Sigmoid colon (tissue), 7 donors: ENCODE measurements at regions of chr5 and their contacts with region 1.

Region 1: DNA sequence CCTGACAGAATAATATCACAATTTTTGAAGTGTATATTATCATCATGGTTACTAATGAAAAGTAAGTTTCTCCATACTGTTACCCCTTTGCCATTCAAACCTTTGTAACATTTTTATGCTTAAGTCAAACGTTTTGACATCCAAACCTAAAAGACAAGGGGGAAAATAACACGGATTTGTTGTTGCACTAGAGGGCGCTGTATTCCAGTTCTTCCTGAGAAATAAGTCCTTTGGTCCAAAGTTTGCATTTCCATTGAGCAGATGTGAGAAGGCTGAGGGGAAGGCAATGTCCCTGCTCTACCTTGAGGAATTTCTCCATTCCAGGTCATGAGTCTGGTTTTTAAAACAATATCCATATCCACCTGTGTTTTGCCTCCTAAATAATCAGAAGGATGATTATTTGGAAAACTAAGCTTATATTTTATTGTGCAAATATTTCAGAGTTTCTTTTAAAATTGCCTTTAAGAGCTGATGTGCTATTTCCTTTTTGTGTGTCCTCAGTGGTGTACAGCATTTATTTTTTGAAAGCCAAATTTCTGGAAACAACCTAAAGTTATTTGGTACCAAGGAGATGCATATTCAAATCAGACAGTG is 9.7 kb downstream of the LECT2 start:
- DNase-seq: peak; percentile 76
- H3K4me3 ChIP-seq: no peak overlapping the region
- H3K27ac ChIP-seq: no peak overlapping the region
- H3K4me1 ChIP-seq: no peaks in the 10 kb centered on the region
- H3K27me3 ChIP-seq: no peaks in the 10 kb centered on the region
- CTCF ChIP-seq: peak; percentile 58 to 81 (median 75)
- EP300 ChIP-seq: no peak
- POLR2A ChIP-seq: no peak

Region 2: DNA sequence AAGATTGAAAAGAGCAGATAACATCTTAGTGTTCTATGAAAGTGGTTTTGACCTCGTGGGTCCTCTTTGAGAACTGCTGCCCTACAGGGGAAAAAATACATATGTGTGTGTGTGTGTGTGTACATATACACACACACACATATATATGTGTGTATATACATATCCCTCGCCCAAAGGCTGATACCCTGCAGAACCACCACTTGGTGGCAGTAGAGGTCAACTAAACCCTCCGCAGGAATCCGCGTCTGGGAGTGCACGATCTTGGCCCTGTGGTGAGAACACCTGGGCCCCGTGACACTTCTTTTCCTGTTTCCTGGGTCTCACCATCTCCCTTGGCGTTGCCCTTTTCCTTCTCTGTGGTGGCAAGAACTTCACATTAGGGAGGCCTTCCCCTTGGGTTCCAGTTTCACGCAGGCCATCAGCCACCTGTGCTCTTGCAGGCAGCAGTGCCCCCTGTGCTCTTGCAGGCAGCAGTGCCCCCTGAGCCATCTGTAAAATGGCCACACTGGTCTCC is 57.7 kb before region 1 on chr5:
- intact Hi-C with region 1: loop called (anchors 5 kb)
- DNase-seq: no peak
- H3K4me3 ChIP-seq: no peak overlapping the region
- H3K27ac ChIP-seq: no peak overlapping the region
- H3K4me1 ChIP-seq: peaks cover 0 to 6% (median 0%) of the 10 kb centered on the region in 4 donors
- H3K27me3 ChIP-seq: no peaks in the 10 kb centered on the region
- CTCF ChIP-seq: peak; percentile 39 to 78 (median 66)
- EP300 ChIP-seq: no peak
- POLR2A ChIP-seq: no peak

Region 3: DNA sequence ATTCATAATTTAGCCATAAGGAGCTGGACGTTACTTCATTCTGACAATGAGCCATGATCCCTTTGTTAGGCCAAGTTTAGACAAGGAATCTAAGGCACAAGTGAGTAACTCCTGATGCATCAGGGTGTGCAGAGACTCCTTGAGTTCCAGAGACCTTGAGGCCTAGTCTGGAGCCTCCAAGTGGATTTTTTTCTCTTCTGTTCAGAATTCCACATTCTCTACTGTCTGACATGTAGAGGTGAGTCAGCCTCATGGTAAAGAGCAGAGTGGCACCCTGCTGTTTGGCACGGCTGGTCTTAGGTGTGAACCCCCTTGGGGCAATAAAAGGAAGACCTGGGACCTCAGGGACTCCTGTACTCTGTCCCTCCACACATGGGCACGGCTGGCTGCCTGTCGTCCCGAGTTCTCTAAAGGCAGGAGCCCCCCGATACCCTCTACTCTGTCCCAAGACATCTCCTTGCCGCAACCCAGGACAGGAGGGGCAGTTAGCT is 61.7 kb after region 1 on chr5:
- intact Hi-C with region 1: loop called (anchors 5 kb)
- DNase-seq: no peak
- H3K4me3 ChIP-seq: no peak overlapping the region
- H3K27ac ChIP-seq: peak overlapping the region in 3 of 4 donors; percentile 13 to 54 (median 41)
- H3K4me1 ChIP-seq: peaks cover 0 to 42% (median 27%) of the 10 kb centered on the region in 4 donors
- H3K27me3 ChIP-seq: no peaks in the 10 kb centered on the region
- CTCF ChIP-seq: no peak
- EP300 ChIP-seq: no peak
- POLR2A ChIP-seq: no peak

Region 4: GRCh38 chr5:136062366-136063274 is 117.6 kb after region 1 on chr5:
- intact Hi-C with region 1: loop called (anchors 2 kb)
- DNase-seq: no peak
- H3K4me3 ChIP-seq: no peak overlapping the region
- H3K27ac ChIP-seq: peak overlapping the region in 2 of 4 donors; percentile 25 to 80
- H3K4me1 ChIP-seq: peaks cover 3 to 78% (median 54%) of the 10 kb centered on the region in 4 donors
- H3K27me3 ChIP-seq: no peaks in the 10 kb centered on the region
- CTCF ChIP-seq: peak in 3 of 4 experiments; percentile 35 to 45 (median 39)
- EP300 ChIP-seq: no peak
- POLR2A ChIP-seq: no peak

Region 5: DNA sequence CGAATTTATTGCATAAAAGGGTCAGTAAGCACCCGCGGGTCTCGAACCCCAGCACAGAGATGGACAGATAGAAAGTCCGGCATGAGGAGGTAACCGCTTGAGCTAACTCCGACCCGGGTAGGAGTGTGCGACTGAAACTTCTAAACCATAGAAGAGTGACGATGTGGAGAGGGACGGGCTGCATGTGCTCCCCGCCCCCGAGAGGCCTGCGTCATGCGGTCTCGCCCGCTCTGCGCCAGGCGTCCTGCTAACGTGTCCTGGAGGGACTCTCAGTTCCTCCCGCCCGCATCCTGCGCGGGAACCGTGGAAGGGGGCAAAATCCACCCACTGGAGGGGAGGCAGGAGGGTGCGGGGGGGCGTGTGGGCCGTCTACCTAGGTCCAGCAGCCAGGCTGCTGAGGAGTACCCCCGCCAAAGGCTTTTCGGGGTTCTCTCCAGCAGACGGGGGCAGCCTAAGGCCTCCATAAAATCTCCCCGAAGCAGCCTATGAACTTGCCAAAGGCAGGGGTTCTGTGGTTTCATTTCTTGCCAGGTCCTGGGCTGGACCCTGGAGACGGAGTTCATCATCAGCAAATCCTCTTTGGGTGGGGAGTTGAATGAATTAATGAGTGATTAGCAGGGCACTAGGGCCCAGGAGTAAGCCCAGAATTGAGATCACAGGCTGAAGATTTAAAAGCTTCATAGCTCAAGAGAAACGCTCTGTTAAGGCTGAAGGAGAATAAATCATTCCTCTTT is 135.6 kb after region 1 on chr5:
- intact Hi-C with region 1: loop called (anchors 2 kb)
- DNase-seq: peak; percentile 94
- H3K4me3 ChIP-seq: peak overlapping the region; percentile 24 to 39 (median 34)
- H3K27ac ChIP-seq: peak overlapping the region; percentile 57 to 83 (median 66)
- H3K4me1 ChIP-seq: peaks cover 0 to 50% (median 11%) of the 10 kb centered on the region in 4 donors
- H3K27me3 ChIP-seq: no peaks in the 10 kb centered on the region
- CTCF ChIP-seq: no peak
- EP300 ChIP-seq: peak in 1 of 4 donors; percentile 61
- POLR2A ChIP-seq: peak; percentile 32 to 33

Region 6: GRCh38 chr5:136174021-136174659 is 229.1 kb after region 1 on chr5:
- intact Hi-C with region 1: loop called (anchors 1 kb)
- DNase-seq: no peak
- H3K4me3 ChIP-seq: no peak overlapping the region
- H3K27ac ChIP-seq: no peak overlapping the region
- H3K4me1 ChIP-seq: no peaks in the 10 kb centered on the region
- H3K27me3 ChIP-seq: no peaks in the 10 kb centered on the region
- CTCF ChIP-seq: peak in 3 of 4 experiments; percentile 29 to 40 (median 40)
- EP300 ChIP-seq: no peak
- POLR2A ChIP-seq: no peak

Region 7: GRCh38 chr5:136212252-136212721 is 267.2 kb after region 1 on chr5:
- intact Hi-C with region 1: loop called (anchors 2 kb)
- DNase-seq: peak; percentile 76
- H3K4me3 ChIP-seq: no peak overlapping the region
- H3K27ac ChIP-seq: no peak overlapping the region
- H3K4me1 ChIP-seq: no peaks in the 10 kb centered on the region
- H3K27me3 ChIP-seq: peaks cover 0 to 12% (median 7%) of the 10 kb centered on the region in 3 donors
- CTCF ChIP-seq: peak; percentile 62 to 89 (median 80)
- EP300 ChIP-seq: no peak
- POLR2A ChIP-seq: no peak